ENCODE measurements at regions of chr9 and their contacts with region 1.

Region 1: DNA sequence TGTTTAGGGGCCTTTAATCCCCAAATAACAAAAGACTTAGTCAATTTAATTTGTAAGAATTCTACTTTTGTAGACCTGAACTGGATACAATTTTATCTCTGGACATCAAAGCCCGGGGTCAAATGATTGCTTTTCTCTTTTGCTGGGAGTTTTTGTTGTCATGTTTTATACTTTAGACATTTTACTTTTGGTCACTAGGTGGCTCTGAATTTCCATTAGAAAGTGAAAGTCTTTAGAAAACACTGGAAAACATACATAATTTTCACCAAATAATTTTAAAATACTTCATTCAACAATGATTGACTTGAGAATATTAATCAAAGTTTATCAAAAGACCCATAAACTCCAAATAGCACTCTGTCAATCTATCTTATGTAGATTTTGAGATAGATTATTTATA is 2.8 kb upstream of the PCA3 start:
- DNase-seq: no peak
- ATAC-seq: no peak
- H3K4me3 ChIP-seq: no peak overlapping the region
- H3K27ac ChIP-seq: no peak overlapping the region
- H3K4me1 ChIP-seq: no peaks in the 10 kb centered on the region
- H3K27me3 ChIP-seq: no peaks in the 10 kb centered on the region
- CTCF ChIP-seq: peak; percentile 28; the same call in 1 of the 2 replicates

Region 2: GRCh38 chr9:76827286-76828080 is 66.0 kb after region 1 on chr9:
- CTCF ChIA-PET with region 1: no interaction called
- POLR2A ChIA-PET with region 1: no interaction called
- in situ Hi-C with region 1: no loop called
- intact Hi-C with region 1: no loop called
- DNase-seq: no peak
- ATAC-seq: no peak
- H3K4me3 ChIP-seq: no peak overlapping the region
- H3K27ac ChIP-seq: no peak overlapping the region
- H3K4me1 ChIP-seq: no peaks in the 10 kb centered on the region
- H3K27me3 ChIP-seq: no peaks in the 10 kb centered on the region
- CTCF ChIP-seq: no peak

Region 3: DNA sequence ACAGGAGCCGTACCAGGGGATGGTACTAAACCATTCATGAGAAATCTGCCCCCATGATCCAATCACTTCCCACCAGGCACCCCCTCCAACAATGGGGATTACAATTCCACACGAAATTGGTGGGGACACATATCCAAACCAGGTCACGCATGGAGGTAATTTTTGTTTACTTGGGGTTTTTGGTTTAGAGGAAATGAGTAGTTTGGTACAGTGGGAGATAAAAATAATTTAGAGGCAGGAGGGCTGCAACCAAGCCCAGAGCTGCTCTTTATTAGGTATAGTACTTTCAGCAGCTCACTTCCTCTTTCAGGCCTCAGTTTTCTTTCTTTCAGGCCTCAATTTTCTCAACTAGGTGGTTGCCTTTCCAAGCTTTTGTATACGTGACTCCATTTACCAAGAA is 121.2 kb after region 1 on chr9:
- CTCF ChIA-PET with region 1: no interaction called
- POLR2A ChIA-PET with region 1: no interaction called
- in situ Hi-C with region 1: no loop called
- intact Hi-C with region 1: no loop called
- DNase-seq: no peak
- ATAC-seq: no peak
- H3K4me3 ChIP-seq: no peak overlapping the region
- H3K27ac ChIP-seq: no peak overlapping the region
- H3K4me1 ChIP-seq: no peaks in the 10 kb centered on the region
- H3K27me3 ChIP-seq: no peaks in the 10 kb centered on the region
- CTCF ChIP-seq: no peak

Region 4: DNA sequence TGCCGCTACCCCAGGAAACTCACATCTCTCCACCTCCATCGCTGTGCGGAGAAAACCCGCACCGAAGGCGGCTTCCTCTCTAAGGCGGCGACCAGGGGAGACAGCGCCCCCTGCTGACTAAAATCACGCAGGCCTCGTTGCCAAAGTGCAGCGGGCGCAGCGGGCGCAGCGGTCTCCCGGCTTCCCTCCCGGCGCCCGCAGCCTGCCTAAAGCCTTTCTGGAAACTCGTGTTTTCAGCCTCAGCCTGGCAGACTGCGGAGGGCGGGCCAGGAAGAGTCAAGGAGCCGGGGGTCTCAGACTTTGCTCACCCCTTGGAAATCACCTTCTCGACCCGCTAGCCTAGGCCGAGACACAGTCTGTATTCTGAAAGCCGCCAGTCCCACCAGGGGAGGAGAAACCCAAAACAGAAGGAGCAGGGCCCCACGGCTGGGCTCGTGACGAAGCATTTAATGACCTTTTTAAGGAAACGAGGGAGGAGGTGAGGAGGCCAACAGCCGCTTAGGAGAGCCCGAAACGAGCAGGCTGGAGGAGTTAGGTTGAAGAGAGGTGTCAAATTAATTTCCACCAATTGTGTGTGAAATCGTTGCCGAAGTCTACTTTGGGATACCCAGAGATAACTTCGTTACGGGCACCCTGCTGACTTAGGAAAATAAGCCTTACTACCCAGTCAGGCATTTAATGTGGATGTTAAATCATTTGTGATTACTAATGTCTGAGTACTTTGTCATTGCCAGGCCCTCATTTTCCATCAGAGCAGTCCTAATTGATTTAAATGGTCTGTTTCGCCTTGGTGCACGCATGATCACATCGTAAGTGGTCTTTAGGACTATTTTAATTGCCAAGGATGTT is 250.7 kb after region 1 on chr9:
- CTCF ChIA-PET with region 1: no interaction called
- POLR2A ChIA-PET with region 1: interaction called, 14 read pairs
- in situ Hi-C with region 1: no loop called
- intact Hi-C with region 1: no loop called
- DNase-seq: no peak
- ATAC-seq: peak; percentile 76
- H3K4me3 ChIP-seq: no peak overlapping the region
- H3K27ac ChIP-seq: no peak overlapping the region
- H3K4me1 ChIP-seq: no peaks in the 10 kb centered on the region; the same call in 1 of the 2 replicates
- H3K27me3 ChIP-seq: peaks cover 2% of the 10 kb centered on the region; the same call in 1 of the 2 replicates
- CTCF ChIP-seq: peak; percentile 83

Measured in Panc1 (cell line).